Activated T-helper 2 cell treated with anti-CD3 and anti-CD28 coated beads, Interferon-gamma antibody, Interleukin-2, Interleukin-4, amounts not matched to agents 10 μg/mL and 5 μg/mL and 100 μg/mL, durations not matched to agents 14 hours and 24 hours and 36 hours (primary cell): ENCODE measurements at regions of chr7 and their contacts with region 1.

Region 1: DNA sequence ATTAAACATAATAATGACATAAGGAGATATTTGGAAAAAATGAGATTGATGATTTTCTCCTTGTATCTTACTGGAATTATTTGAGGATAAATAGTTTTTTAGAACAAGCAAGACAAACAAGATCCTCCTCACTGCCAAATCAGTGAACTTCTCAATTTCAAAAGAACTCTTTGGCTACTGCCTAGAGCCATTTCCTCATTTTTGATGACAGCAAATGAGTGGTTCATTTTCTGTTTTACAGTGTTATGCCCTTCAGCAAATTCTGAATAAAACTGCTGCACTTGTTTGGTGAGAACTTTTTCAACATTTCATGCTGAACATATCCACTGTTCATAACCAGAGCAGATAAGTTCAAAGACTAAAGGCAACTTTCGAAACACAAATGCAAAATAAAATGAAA is 42.5 kb upstream of the AHR start:
- DNase-seq: no peak
- H3K4me3 Mint-ChIP-seq: no peak overlapping the region
- H3K27ac Mint-ChIP-seq: no peak overlapping the region
- H3K4me1 Mint-ChIP-seq: peaks cover 15% of the 10 kb centered on the region
- H3K27me3 Mint-ChIP-seq: no peaks in the 10 kb centered on the region

Region 2: GRCh38 chr7:16999541-17000267 is 256.2 kb before region 1 on chr7:
- intact Hi-C with region 1: loop called (anchors 2 kb)
- DNase-seq: peak; percentile 15
- H3K4me3 Mint-ChIP-seq: peak overlapping the region; percentile 53
- H3K27ac Mint-ChIP-seq: peak overlapping the region; percentile 77
- H3K4me1 Mint-ChIP-seq: peaks cover 33% of the 10 kb centered on the region
- H3K27me3 Mint-ChIP-seq: peaks cover 2% of the 10 kb centered on the region

Region 3: DNA sequence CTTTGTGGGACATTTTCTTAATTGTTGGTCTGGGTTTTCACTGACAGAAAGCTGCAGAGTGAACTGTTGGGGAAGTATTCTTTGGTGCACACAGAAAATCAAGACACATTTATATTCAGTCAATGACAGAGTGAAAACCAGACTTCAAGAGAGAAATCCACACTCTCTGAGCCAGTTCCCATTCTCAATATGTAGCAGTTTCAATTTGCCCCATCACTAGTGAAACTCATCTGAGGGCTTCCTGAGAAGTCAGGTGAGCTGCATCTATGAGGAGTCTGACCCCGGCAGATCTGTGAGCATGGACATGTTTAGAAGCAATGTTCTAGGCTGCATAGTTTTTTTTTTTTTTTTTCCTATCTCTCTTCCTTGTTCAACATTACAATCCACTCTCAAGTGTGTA is 121.1 kb before region 1 on chr7:
- intact Hi-C with region 1: loop called (anchors 1 kb)
- DNase-seq: no peak
- H3K4me3 Mint-ChIP-seq: no peak overlapping the region
- H3K27ac Mint-ChIP-seq: peak overlapping the region; percentile 77
- H3K4me1 Mint-ChIP-seq: peaks cover 70% of the 10 kb centered on the region
- H3K27me3 Mint-ChIP-seq: no peaks in the 10 kb centered on the region

Region 4: DNA sequence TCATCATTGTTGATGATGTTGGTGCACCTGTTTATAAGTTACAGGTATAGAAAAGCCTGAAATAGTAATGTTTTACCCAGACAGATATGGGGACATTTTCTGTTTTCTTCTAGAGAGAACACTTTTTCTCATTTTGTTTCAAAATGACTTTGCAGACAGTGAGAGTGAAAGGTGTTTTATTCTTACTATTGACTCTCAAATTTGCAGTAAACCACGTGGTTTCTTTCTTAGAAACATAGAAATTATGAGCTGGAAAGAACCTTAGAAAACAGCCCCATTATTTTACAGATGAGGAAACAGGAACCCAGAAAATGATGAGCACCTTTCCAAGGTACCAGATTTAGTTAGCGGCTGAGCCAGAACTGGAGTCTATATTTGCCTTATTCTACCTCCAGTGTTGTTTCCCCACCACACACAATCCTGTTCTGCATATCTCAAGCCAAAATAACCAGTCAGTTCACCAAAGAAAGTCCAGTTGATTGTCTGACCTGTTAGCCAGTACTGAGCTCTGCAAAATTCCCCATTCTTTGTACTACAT is 96.4 kb before region 1 on chr7:
- intact Hi-C with region 1: loop called (anchors 1 kb)
- DNase-seq: no peak
- H3K4me3 Mint-ChIP-seq: no peak overlapping the region
- H3K27ac Mint-ChIP-seq: peak overlapping the region; percentile 36
- H3K4me1 Mint-ChIP-seq: peaks cover 50% of the 10 kb centered on the region
- H3K27me3 Mint-ChIP-seq: no peaks in the 10 kb centered on the region

Region 5: DNA sequence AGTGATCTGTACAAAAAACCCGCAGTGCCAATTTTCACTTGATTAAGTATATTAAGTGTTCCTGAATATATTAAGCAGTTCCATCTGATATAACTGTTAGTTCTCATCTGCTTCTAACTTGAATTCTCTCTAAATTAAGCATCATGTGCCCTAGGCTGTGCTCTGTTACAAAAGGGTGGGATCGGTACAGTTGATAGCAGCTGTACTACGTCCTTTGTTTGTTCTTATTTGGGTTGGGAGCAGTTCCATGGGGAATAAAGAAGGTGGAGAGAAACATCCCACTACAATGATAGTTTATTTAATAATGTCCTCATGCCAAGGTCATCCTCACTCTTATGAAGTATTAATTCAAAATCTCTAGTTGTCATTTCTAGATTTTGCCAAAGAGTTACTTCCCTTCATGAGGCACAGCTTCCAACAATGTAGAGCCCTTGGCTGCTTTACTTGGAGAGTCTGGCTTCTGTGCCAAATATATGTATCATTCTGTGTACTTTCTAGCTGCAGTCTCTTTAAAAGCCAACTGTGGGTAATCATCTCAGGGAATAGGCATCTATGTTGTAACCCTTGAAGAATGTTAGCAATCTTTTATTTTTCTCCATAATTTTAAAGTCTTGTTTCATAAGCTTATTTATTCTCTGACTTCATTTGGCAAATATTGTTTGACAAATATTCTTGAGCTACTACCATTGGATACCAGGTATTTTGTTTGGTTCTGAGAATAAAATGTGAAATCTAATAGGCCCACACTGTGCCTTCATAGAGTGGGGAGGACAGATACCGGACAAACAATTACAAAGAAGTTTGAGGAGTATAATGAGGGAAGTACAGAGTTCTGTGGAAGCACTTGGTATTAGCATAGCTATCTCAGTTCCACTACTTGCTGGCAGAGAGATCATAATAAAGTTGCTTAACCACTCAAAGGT is 20.1 kb after region 1 on chr7:
- intact Hi-C with region 1: loop called (anchors 1 kb)
- DNase-seq: no peak
- H3K4me3 Mint-ChIP-seq: no peak overlapping the region
- H3K27ac Mint-ChIP-seq: no peak overlapping the region
- H3K4me1 Mint-ChIP-seq: peaks cover 13% of the 10 kb centered on the region
- H3K27me3 Mint-ChIP-seq: peaks cover 3% of the 10 kb centered on the region

Region 6: DNA sequence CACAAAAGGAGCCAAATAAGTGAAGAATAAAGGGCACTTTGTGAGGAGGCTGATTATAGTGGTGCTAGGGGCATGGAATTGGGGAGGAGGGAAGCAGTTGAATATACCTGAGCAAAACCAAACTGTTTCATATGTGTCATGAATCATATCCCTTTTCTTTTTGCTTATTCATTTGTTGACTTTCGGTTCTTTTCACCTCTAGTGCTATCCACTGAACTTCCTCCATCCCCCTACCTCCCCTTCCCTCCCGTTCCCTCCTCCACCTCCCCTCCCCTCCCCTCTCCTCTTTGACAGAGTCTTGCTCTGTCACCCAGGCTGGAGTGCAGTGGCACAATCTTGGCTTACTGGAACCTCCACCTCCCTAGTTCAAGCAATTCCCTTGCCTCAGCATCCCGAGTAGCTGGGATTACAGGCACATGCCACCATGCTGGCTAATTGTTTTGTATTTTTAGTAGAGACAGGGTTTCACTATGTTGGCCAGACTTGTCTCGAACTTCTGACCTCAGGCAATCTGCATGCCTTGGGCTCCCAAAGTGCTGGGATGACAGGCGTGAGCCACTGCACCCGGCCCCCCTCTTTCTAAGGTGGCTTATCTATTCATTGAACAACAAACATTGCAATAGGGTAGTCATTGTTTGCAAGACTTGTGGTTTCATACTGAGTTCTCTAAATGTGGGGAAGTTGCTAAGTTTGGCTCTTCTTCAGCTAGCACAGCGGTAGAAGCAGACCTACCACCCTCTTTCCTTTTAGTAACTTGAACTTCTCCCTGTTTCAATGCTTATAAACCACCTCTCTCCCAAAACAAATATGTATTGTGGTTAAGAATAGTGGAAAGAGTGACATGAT is 922.1 kb after region 1 on chr7:
- intact Hi-C with region 1: loop called (anchors 5 kb)
- DNase-seq: peak; percentile 10
- H3K4me3 Mint-ChIP-seq: peak overlapping the region; percentile 13
- H3K27ac Mint-ChIP-seq: no peak overlapping the region
- H3K4me1 Mint-ChIP-seq: peaks cover 17% of the 10 kb centered on the region
- H3K27me3 Mint-ChIP-seq: peaks cover 8% of the 10 kb centered on the region